ENCODE measurements at regions of chr6 and their contacts with region 1.

Region 1: DNA sequence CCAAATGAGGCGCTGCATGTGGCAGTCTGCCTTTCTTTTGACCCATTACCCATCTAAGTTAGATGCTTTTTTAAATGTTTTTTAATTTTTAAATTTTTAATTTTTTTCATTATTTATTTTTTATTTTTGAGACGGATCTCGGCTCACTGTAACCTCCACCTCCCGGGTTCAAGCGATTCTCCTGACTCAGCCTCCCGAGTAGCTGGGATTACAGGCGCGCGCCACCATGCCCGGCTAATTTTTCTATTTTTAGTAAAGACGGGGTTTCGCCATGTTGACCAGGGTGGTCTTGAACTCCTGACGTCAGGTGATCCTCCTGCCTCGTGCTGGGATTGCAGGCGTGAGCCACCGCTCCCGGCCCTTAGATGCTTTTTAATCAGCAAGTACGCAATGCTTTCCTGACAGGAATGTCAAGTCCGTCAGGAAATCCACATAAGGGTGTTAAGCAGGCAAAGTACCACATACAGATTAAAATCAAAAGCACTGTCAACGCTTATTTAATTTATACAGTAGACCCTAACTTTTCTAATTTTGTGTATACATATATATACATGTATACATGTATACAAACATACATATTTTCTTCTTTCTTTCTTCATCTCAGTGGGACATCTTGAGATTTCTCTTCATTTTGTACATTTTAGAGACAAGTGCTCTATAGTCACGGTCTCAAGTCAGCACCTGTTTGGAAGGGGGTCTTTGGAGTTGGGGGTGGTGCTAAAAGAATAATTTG is 995 bp upstream of the GSTA4 start:
- DNase-seq: peak; percentile 49
- H3K4me3 Mint-ChIP-seq: peak overlapping the region; percentile 95
- H3K27ac Mint-ChIP-seq: peak overlapping the region; percentile 99
- H3K4me1 Mint-ChIP-seq: peaks cover 31% of the 10 kb centered on the region
- H3K27me3 Mint-ChIP-seq: peaks cover 5% of the 10 kb centered on the region

Region 2: DNA sequence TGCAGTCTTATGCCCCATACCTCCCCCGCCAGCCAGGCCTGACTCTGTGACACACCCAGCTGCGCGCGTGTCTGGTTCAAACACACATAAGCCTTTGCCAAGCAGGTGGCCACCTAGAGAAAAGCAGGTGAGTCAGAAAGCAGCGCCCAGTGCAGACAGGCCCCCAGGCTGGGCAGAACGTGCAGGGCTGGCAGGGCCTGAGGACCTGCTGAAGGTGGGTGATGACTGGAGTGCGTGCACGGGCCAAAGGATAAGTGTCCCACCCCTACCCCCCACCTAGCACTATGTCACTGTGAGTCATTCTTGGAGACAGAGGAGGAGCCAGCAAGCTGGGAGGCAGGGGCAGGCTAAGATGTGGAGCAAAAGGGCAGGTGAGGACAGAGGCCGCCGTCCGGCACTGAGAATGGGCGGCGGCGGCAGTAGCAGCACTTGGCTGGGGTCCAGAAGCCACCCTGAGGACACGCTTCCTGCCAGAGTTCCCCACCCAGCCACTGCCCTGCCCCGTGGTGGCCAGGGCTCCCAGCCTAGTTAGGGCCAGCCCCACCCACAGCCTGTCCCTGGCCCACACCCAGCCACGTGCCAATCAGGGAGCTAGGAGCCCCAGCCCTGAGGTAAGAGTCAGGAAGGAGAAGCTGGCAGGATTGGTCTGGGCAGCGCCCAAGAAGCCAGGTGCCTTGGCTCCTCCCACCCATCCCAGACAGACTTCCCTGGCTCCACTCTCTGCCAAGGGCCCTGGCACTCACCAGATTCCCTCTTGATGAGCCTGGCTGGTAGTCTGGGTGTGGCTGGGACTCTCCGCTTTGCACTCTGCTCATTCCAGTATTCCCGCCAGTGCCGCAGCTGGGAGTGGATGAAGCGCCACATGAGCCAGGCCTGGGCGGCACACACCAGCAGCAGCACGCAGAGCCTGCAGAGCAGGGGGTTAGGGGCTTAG is 492.0 kb before region 1 on chr6:
- CTCF ChIA-PET with region 1: no interaction called
- POLR2A ChIA-PET with region 1: no interaction called
- intact Hi-C with region 1: no loop called
- DNase-seq: no peak
- H3K4me3 Mint-ChIP-seq: no peak overlapping the region
- H3K27ac Mint-ChIP-seq: no peak overlapping the region
- H3K4me1 Mint-ChIP-seq: no peaks in the 10 kb centered on the region
- H3K27me3 Mint-ChIP-seq: no peaks in the 10 kb centered on the region

Region 3: DNA sequence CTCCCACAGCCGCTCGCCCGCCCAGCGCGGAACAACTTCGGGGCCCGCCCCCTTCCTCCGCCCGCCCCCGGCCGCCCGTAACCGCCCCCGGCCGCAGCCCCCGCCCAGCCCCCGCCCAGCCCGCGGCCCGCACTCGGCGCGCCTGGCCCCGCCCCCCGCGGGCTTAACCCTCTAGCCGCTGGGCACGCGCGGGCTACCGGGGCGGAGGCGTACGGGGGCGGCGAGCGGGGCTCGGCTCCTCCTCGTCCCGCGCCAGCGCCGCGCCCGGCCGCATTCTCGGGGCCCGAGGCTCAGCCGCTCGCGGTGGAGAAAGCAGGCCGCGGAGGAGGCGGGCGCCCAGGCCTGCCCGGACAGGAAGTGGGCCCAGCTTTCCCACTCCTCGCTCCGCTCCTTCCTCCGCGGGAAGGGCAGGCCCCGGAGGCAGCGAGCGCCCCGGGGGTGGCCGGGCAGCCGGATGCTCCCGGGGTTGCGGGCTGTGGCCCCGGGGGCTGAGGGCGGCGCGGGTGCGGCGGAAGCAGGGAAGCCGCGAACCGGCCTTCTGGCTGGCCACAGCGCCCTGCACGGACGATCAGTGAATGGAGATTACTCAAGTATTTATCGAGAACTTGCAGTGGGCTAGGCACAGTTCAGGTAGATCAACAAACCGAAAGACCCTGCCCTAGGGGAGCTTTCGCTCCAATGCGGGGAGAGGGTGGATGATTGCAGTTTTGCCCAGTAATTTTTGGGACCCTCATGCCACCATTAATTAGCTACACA is 418.9 kb before region 1 on chr6 and contains the start of gene TRAM2:
- CTCF ChIA-PET with region 1: no interaction called
- POLR2A ChIA-PET with region 1: no interaction called
- intact Hi-C with region 1: loop called (anchors 5 kb)
- DNase-seq: peak; percentile 70
- H3K4me3 Mint-ChIP-seq: peak within 1 kb of the TSS; percentile 77
- H3K27ac Mint-ChIP-seq: peak within 1 kb of the TSS; percentile 59
- H3K4me1 Mint-ChIP-seq: peaks cover 29% of the 10 kb centered on the region
- H3K27me3 Mint-ChIP-seq: no peaks in the 10 kb centered on the region
- total RNA-seq, gene TRAM2: 2.4 to 2.6 TPM

Region 4: DNA sequence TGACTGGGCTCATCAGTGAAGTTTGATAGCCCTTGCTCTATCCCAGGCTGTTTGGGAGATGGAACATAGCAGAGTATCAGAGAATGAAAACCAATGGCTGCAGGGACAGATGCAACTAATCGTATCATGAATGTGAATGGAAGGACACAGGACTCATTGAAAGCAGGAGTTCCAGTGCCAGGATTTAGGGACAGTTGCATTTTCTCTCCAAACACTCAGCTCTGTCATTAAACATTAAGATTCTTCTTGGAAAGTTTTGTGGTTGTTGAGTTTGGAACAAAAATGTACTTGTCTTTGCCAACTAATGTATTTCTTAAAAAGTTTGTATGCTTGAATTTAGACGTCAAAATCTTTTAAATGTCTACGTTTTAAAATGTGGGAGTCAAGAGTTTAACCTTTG is 124.5 kb before region 1 on chr6:
- CTCF ChIA-PET with region 1: no interaction called
- POLR2A ChIA-PET with region 1: no interaction called
- intact Hi-C with region 1: no loop called
- DNase-seq: no peak
- H3K4me3 Mint-ChIP-seq: no peak overlapping the region
- H3K27ac Mint-ChIP-seq: no peak overlapping the region
- H3K4me1 Mint-ChIP-seq: peaks cover 1% of the 10 kb centered on the region
- H3K27me3 Mint-ChIP-seq: peaks cover 4% of the 10 kb centered on the region

Region 5: GRCh38 chr6:52904562-52905279 is 91.4 kb before region 1 on chr6:
- CTCF ChIA-PET with region 1: no interaction called
- POLR2A ChIA-PET with region 1: no interaction called
- intact Hi-C with region 1: loop called (anchors 5 kb)
- DNase-seq: peak; percentile 27
- H3K4me3 Mint-ChIP-seq: no peak overlapping the region
- H3K27ac Mint-ChIP-seq: no peak overlapping the region
- H3K4me1 Mint-ChIP-seq: no peaks in the 10 kb centered on the region
- H3K27me3 Mint-ChIP-seq: peaks cover 11% of the 10 kb centered on the region

Region 6: GRCh38 chr6:53048431-53049195 is 52.5 kb after region 1 on chr6:
- CTCF ChIA-PET with region 1: interaction called, 10 read pairs
- POLR2A ChIA-PET with region 1: interaction called, 3 read pairs
- intact Hi-C with region 1: no loop called
- DNase-seq: no peak
- H3K4me3 Mint-ChIP-seq: no peak overlapping the region
- H3K27ac Mint-ChIP-seq: no peak overlapping the region
- H3K4me1 Mint-ChIP-seq: peaks cover 22% of the 10 kb centered on the region
- H3K27me3 Mint-ChIP-seq: no peaks in the 10 kb centered on the region

Region 7: DNA sequence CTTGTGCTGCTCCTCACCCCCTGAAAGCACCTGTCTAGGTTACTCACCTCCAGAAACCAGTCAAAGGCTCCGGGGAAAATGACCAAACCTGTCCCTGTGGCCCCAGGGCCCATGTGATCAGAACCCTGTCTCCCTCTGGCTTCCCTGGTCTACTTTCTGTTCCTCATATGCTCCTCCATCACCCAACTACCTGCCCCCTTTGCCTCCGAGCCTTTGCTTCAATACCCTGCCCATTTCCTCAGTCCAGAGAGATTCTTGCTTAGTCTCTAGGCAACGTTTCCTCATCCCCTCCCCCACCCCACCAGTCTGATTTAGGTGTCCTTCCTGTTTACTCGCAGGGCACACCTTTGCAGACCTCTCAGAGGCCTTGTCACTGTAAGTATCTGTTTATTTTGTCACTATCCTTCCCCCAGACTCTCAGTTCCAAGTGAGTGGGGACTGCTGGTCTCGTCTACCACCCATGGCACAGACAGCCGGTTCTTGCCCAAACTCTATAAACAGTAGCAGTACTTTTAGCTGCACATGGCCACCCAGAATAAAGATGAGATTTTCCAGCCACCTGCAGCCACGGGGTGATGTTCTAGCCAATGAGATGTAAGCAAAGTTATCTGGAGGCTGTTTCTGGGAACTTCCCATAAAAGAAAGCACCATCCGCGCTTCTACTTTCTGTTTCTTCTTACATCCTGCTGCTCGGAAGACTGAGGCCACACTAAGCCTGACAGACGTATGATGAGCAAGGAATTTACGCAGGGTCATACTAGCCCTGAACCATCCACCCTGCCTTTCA is 339.3 kb after region 1 on chr6:
- CTCF ChIA-PET with region 1: no interaction called
- POLR2A ChIA-PET with region 1: no interaction called
- intact Hi-C with region 1: loop called (anchors 10 kb)
- DNase-seq: peak; percentile 85
- H3K4me3 Mint-ChIP-seq: peak overlapping the region; percentile 78
- H3K27ac Mint-ChIP-seq: peak overlapping the region; percentile 99
- H3K4me1 Mint-ChIP-seq: peaks cover 90% of the 10 kb centered on the region
- H3K27me3 Mint-ChIP-seq: no peaks in the 10 kb centered on the region

Measured in activated CD4-positive, alpha-beta memory T cell treated with anti-CD3 and anti-CD28 coated beads for 36 hours (primary cell).